ENCODE measurements at regions of chr1 and their contacts with region 1.

Region 1: GRCh38 chr1:204530932-204531331 is 14.7 kb downstream of the MDM4 start:
- DNase-seq: no peak
- H3K4me3 ChIP-seq: no peak overlapping the region
- H3K27ac ChIP-seq: no peak overlapping the region
- H3K4me1 ChIP-seq: no peaks in the 10 kb centered on the region
- H3K27me3 ChIP-seq: no peaks in the 10 kb centered on the region
- CTCF ChIP-seq: no peak

Region 2: DNA sequence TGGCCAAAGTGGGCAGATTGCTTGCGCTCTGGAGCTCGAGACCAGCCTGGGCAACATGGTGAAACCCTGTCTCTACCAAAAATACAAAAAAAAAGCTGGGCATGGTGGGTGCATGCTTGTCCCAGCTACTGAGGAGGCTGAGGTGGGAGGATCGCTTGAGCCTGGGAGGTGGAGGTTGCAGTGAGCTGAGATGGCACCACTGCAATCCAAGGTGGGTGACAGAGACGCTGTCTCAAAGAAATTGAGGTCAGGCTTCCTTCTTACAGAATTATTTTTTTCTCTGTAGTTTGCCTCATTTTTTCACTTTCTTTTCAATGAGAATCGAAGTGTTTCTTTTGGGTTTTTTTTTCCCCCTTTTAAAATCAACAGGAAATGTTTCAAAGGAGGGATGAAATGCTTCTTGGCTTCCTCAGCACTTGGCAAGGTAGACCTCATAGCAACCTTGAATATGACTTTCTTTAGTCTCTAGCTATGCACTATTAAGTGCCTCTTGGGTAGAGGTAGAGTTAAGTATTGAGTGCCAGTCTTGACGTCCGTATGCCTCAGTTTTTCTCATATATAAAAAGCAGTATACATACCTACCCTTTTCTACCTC is 25.6 kb after region 1 on chr1:
- CTCF ChIA-PET with region 1: interaction called, 27 read pairs
- dilution Hi-C with region 1: no loop called
- in situ Hi-C with region 1: no loop called
- intact Hi-C with region 1: no loop called
- DNase-seq: no peak
- H3K4me3 ChIP-seq: no peak overlapping the region
- H3K27ac ChIP-seq: no peak overlapping the region
- H3K4me1 ChIP-seq: no peaks in the 10 kb centered on the region
- H3K27me3 ChIP-seq: no peaks in the 10 kb centered on the region
- CTCF ChIP-seq: no peak

Region 3: GRCh38 chr1:204640578-204640977 is 109.6 kb after region 1 on chr1:
- CTCF ChIA-PET with region 1: no interaction called
- dilution Hi-C with region 1: no loop called
- in situ Hi-C with region 1: no loop called
- intact Hi-C with region 1: no loop called
- DNase-seq: no peak
- H3K4me3 ChIP-seq: no peak overlapping the region
- H3K27ac ChIP-seq: no peak overlapping the region
- H3K4me1 ChIP-seq: no peaks in the 10 kb centered on the region
- H3K27me3 ChIP-seq: peaks cover 5% of the 10 kb centered on the region
- CTCF ChIP-seq: no peak

Measured in mammary epithelial cell (primary cell).